Mammary epithelial cell (primary cell): ENCODE measurements at regions of chr1 and their contacts with region 1.

Region 1: DNA sequence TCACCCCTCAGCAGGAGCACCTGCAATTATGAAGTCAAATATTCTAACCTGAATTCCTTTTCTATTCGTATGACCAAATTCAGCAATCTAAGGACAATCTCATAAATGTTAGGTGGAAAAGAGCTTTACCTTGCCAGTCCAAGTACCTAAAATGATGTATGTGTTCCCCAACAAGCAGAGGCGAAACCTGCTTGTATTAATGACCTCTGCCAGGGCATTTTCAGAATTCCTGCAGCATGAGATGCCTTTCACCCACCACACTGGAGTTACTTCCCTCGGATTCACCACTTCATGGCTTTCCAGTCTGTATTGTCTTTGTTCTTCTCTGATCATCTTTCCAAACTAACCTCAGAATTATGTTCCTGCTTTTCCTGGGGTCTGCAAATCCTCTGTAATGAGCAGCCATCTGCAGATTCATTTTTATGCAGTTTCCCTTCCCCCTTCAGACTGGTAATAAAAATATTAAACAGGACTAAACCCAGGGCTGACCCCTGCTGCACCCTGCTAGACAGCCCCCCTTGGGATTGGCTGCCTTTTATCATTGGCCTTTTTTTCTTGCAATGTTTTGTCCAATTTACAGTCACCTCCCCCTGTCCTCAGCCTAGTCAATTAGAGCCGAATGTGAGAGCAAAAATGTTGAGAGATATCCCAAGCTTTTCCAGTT is 26.6 kb upstream of the CASQ2 start:
- DNase-seq: peak; percentile 82
- H3K4me3 ChIP-seq: no peak overlapping the region
- H3K27ac ChIP-seq: peak overlapping the region; percentile 71
- H3K4me1 ChIP-seq: peaks cover 46% of the 10 kb centered on the region
- H3K27me3 ChIP-seq: no peaks in the 10 kb centered on the region
- CTCF ChIP-seq: no peak

Region 2: DNA sequence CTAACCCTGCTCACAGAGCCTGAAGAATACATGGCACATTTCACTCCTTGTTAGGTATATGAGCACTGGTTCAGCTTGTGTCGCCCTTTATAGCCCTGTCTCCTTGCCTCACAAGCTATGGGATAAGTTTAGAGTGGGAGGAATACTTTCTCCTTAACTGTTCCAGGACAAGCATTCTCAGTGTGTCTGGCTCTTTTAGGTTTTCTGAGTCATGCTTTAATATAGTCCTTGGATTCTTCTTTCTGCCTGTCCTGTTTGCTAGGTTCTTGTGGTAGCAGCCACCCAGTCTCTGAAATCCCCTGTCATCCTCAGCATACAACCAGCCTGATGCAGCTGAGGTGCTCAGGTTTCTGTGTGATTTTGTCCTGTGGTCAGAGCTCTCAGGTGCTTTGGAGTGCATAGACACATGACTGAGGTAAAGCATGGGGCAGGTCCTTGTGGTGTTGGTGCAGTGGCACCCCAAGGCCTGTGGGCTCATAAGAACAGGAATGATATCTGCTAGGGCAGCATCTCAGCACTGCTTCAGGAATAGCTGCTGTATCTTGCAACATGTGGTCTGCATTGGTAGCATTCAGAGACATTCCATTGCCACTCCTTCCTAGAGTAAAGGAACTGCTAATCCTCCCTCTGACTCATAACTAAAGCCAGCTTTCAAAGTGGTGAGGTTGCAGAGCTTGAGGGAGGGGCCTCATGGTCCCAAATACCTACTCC is 12.4 kb before region 1 on chr1:
- CTCF ChIA-PET with region 1: interaction called, 3 read pairs
- dilution Hi-C with region 1: no loop called
- in situ Hi-C with region 1: no loop called
- intact Hi-C with region 1: loop called (anchors 1 kb)
- DNase-seq: peak; percentile 97
- H3K4me3 ChIP-seq: no peak overlapping the region
- H3K27ac ChIP-seq: peak overlapping the region; percentile 97
- H3K4me1 ChIP-seq: peaks cover 31% of the 10 kb centered on the region
- H3K27me3 ChIP-seq: no peaks in the 10 kb centered on the region
- CTCF ChIP-seq: no peak